MCF 10A (cell line): ENCODE measurements at regions of chr10 and their contacts with region 1.

Region 1: GRCh38 chr10:95445837-95446486 is 115.2 kb downstream of the SORBS1 start:
- DNase-seq: peak; percentile 82
- H3K4me3 Mint-ChIP-seq: no peak overlapping the region
- H3K27ac Mint-ChIP-seq: no peak overlapping the region
- H3K4me1 Mint-ChIP-seq: peaks cover 15% of the 10 kb centered on the region
- H3K27me3 Mint-ChIP-seq: no peaks in the 10 kb centered on the region
- CTCF ChIP-seq: peak; percentile 81

Region 2: GRCh38 chr10:95459446-95460045 is 13.6 kb after region 1 on chr10:
- CTCF ChIA-PET with region 1: interaction called, 18 read pairs
- POLR2A ChIA-PET with region 1: interaction called, 4 read pairs
- intact Hi-C with region 1: no loop called
- DNase-seq: no peak
- H3K4me3 Mint-ChIP-seq: no peak overlapping the region
- H3K27ac Mint-ChIP-seq: no peak overlapping the region
- H3K4me1 Mint-ChIP-seq: no peaks in the 10 kb centered on the region
- H3K27me3 Mint-ChIP-seq: no peaks in the 10 kb centered on the region
- CTCF ChIP-seq: no peak

Region 3: GRCh38 chr10:95480102-95480900 is 34.3 kb after region 1 on chr10:
- CTCF ChIA-PET with region 1: interaction called, 18 read pairs
- POLR2A ChIA-PET with region 1: no interaction called
- intact Hi-C with region 1: no loop called
- DNase-seq: no peak
- H3K4me3 Mint-ChIP-seq: no peak overlapping the region
- H3K27ac Mint-ChIP-seq: no peak overlapping the region
- H3K4me1 Mint-ChIP-seq: peaks cover 6% of the 10 kb centered on the region
- H3K27me3 Mint-ChIP-seq: no peaks in the 10 kb centered on the region
- CTCF ChIP-seq: no peak